ENCODE measurements at regions of chr19 and their contacts with region 1.

Region 1: GRCh38 chr19:14505488-14506432 is 9.8 kb upstream of the GIPC1 start:
- DNase-seq: peak; percentile 93
- H3K4me3 ChIP-seq: peak overlapping the region in 1 of 3 experiments; percentile 16
- H3K27ac ChIP-seq: peak overlapping the region; percentile 96
- H3K4me1 ChIP-seq: peaks cover 42% of the 10 kb centered on the region
- H3K27me3 ChIP-seq: no peaks in the 10 kb centered on the region
- CTCF ChIP-seq: peak; percentile 83 to 93

Region 2: DNA sequence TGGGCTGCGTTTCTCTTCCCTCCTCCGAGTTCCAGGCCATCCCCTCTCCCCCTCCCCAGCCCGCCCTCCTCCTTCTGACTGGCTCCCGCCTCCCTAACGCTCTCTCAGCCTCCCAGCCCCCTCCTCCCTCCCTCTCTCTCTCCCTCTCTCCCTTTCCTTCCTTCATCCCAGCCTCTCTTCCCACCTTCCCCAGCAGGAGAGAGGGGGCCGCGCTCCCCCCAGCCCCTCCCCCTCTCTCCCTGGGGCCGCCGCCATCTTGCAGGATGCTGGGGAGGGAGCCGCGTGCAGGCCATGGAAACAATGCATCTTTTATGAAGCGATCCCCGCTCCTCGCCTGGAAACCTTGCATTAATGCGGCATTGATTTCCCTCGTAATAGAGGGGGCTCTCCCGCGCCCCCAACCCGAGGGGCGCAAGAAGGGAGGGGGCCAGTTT is 257.2 kb before region 1 on chr19:
- CTCF ChIA-PET with region 1: no interaction called
- dilution Hi-C with region 1: no loop called
- in situ Hi-C with region 1: no loop called
- intact Hi-C with region 1: no loop called
- DNase-seq: no peak
- H3K4me3 ChIP-seq: peak overlapping the region in 1 of 3 experiments; percentile 29
- H3K27ac ChIP-seq: no peak overlapping the region
- H3K4me1 ChIP-seq: no peaks in the 10 kb centered on the region
- H3K27me3 ChIP-seq: no peaks in the 10 kb centered on the region
- CTCF ChIP-seq: no peak

Region 3: DNA sequence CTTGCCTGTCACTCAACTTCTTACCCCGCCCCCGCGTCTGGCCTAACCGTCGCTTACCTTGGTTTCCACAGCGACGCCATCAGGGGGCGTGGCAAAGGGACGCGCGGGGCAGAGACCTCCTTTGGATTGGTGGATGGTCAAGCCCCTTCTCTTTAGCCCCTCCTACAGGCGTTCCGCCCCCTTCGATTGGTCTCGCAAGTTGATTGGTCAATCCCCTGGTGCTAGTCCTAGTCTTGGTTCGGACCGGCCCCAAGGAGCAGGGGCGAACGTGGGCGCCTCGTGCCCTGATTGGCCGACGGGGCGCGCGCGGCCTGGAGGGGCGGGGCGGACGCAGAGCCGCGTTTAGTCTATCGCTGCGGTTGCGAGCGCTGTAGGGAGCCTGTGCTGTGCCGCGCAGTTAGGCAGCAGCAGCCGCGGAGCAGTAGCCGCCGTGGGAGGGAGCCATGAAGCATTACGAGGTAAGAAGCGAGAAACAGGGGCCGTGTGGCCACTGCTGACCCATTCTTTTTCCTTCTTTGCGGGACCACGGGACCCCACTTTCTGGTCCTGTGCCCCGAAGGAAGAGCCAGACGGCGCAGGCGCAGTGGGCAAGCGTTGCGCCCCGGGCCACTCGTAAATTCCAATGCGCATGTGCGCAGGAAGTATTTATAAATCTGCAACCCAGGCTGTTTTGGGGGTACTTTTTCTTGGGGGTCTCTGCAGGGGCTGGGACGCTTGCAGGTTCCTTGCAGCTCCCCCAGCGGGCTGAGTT is 23.7 kb after region 1 on chr19 and contains the start of gene TECR:
- CTCF ChIA-PET with region 1: interaction called, 3 read pairs
- dilution Hi-C with region 1: no loop called
- in situ Hi-C with region 1: no loop called
- intact Hi-C with region 1: loop called (anchors 1 kb)
- DNase-seq: peak; percentile 100
- H3K4me3 ChIP-seq: peak within 1 kb of the TSS; percentile 78 to 94 (median 89)
- H3K27ac ChIP-seq: peak within 1 kb of the TSS; percentile 97
- H3K4me1 ChIP-seq: peaks cover 44% of the 10 kb centered on the region
- H3K27me3 ChIP-seq: no peaks in the 10 kb centered on the region
- CTCF ChIP-seq: peak in 1 of 2 donors; percentile 4
- total RNA-seq, gene TECR: 68.0 to 168 TPM

Region 4: DNA sequence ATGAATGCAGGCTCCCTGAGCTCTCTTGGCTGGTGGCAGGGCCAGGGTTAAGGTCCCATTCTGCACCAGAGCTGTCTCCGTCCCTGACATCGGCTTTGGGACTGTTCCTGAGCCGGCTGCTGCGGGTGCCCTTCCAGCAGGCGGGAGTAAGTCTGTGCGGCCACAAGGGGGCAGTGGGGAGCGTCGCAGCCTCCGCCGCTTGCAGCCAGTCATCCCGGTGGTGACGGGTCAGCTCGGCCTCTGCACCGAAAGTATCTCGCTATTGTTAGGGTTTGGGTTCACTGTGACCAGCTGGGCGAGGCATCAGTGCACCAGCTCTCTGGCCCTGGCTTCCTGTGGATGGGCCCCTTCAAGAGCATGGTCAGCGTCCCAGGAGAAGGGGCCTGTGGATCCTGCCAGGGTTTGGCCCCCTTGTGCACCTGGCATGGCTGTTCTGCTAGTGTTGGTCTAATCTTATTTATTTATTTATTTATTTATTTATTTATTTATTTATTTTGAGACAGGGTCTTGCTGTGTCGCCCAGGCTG is 51.0 kb after region 1 on chr19:
- CTCF ChIA-PET with region 1: no interaction called
- dilution Hi-C with region 1: no loop called
- in situ Hi-C with region 1: no loop called
- intact Hi-C with region 1: loop called (anchors 1 kb)
- DNase-seq: peak; percentile 76
- H3K4me3 ChIP-seq: no peak overlapping the region
- H3K27ac ChIP-seq: peak overlapping the region; percentile 57
- H3K4me1 ChIP-seq: peaks cover 63% of the 10 kb centered on the region
- H3K27me3 ChIP-seq: no peaks in the 10 kb centered on the region
- CTCF ChIP-seq: peak; percentile 94 to 98

Measured in mammary epithelial cell (primary cell).